ENCODE measurements at regions of chr6 and their contacts with region 1.

Region 1: DNA sequence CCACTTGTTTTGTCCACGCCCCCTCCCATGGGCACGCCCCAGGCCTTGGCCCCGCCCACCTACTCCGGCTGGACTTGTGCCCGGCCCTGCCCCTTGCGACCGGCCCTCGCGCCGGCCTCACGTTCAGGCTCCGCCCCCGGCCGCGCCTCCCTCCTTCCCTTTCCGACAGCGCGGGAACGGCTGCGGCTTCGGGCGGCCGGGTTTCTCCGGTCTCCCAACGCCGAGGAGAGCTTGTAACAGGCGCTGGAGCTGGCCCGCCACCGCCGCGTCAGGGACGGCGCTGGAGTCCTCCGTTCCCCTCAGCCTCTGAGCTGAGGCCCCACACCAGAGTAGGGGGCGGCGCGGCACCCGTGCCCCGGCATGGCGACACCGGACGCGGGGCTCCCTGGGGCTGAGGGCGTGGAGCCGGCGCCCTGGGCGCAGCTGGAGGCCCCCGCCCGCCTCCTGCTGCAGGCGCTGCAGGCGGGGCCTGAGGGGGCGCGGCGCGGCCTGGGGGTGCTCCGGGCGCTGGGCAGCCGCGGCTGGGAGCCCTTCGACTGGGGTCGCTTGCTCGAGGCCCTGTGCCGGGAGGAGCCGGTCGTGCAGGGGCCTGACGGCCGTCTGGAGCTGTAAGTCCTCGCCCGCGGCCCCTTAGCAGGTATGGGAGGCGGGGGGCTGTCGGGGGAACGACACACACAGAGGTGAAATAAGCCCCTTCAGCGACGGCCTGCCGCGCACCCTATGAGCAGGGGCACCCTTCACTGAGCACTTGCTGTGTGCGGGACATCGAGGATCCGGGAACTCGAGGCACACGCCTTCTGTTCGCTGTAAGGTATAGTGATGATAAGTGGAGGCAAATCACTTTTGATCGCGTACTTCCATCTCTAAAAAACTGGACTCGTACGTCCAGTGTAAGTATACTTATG is at the start of gene FANCE:
- DNase-seq: peak; percentile 78 to 98 (median 92)

Region 2: DNA sequence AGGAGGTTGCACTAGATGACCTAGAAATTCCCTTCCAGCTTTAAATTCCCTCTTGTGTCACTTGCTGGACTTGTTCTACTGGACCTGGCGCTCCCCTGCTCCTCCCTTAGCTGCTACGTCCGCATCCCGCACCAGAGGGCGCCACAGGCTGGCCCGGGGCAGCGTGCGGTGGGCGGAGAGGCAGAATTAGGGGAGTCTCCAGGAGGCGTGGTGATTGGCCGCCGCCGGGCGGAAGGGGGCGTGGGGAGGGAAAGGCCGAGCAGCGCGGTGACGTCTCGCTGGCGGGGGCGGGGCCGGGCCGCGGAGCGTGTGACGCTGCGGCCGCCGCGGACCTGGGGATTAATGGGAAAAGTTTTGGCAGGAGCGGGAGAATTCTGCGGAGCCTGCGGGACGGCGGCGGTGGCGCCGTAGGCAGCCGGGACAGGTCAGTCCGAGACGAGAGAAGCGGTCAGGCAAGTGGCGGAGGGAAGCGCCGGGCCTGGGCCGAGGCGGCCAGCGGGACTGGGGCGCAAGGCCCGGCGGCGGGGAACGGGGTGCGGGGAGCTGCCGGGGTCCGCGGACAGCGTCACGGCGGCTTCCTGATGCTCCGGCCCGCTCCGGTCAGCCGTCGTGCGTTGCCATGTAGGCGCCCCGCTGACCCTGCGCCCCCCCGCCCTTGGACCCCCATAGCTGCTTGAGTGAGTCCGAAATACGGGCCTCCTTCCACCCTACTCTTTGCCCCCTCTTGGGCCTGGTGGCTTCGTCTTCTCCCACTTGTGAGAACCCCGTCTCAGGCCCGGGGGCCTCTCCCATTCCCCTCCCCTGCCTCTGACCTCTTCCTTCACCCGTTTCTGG is 110.0 kb before region 1 on chr6 and contains the start of gene PPARD:
- intact Hi-C with region 1: loop called (anchors 1 kb)
- DNase-seq: peak; percentile 97 to 100 (median 99)

Region 3: DNA sequence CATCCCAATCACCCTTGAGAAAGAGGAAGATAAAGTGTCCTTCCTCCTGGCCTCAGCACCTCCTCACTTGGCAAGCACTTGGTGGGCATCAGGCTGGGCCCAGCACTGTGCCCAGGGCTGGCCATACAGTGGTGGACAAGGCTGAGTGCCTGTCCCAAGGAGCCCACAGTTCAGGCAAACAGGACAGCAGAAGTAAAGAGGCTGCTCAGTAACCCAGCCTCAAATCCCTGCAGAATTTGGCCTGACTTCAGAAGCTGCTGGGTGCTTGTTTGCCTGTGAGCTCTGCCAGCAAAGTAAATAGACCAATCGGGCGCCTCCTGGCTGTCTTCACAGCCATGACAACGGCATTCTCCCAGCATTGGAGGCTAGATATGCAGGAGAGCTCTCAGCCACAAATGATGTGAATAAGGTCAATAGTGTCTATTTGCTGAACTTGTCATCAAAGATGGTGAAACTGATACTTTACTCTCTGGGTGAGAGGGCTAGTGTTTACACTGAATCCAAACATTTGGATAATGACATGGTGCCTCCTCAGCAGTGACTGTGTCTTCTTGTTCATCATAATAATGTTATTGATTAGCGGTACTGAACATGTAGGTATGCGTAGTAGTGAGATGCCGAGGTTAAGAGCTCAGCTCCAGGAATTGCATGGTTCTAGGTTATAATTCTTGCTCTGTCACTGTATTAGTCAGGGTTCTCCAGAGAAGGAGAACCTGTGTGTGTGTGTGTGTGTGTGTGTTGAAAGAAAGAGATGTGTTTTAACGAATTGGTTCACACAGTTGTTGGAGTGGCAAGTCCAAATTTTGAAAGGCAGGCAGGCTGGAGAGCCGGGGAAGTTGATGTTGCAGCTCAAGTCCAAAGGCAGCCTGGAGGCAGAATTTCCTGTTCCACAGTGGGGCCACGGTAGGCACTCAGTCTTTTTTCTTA is 37.1 kb before region 1 on chr6:
- intact Hi-C with region 1: loop called (anchors 5 kb)
- DNase-seq: peak; percentile 73 to 98 (median 87)

Region 4: DNA sequence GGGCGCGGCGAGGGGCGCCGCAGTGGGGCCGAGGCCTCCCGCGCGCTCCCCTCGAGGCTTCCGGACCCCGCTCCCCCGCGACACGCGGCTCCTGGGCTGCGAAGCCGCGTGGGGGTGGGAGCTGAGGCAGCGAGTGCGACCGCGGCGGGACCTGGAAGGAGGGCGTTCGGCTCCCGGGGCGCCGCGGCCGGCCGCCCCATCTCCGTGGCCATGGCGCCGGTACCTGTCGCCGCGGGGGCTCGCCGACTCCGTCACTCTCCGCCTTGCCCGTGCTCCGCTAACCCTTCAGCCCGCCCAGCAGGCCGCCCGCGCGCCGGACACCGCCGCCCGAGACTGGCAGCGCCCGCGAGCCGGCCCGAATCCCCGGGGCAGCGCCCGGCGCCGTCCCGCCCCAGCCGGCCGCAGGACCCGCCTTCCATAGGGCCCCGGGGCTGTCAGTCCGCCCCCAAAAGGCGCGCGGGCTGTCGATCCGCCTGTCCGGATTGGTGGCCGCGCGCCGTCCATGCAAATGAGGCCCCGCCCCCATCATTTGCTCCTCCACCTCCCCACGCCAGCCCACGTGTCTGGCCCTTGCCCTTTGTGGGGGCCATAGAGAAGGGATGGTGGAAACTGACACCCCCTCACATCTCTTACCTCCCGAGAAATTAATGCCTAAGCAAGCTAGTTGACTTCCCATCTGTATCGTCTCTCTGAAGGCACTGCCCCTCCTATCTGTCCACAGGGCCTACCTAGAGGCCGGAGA is 236.3 kb after region 1 on chr6 and contains the start of gene FKBP5:
- intact Hi-C with region 1: no loop called
- DNase-seq: peak; percentile 83 to 99 (median 93)